ENCODE measurements at regions of chr20 and their contacts with region 1.

Region 1: GRCh38 chr20:53939572-53940359 is 130.6 kb downstream of the BCAS1 start:
- DNase-seq: peak; percentile 92
- H3K4me3 Mint-ChIP-seq: no peak overlapping the region
- H3K27ac Mint-ChIP-seq: no peak overlapping the region
- H3K4me1 Mint-ChIP-seq: peaks cover 38% of the 10 kb centered on the region
- H3K27me3 Mint-ChIP-seq: no peaks in the 10 kb centered on the region

Region 2: DNA sequence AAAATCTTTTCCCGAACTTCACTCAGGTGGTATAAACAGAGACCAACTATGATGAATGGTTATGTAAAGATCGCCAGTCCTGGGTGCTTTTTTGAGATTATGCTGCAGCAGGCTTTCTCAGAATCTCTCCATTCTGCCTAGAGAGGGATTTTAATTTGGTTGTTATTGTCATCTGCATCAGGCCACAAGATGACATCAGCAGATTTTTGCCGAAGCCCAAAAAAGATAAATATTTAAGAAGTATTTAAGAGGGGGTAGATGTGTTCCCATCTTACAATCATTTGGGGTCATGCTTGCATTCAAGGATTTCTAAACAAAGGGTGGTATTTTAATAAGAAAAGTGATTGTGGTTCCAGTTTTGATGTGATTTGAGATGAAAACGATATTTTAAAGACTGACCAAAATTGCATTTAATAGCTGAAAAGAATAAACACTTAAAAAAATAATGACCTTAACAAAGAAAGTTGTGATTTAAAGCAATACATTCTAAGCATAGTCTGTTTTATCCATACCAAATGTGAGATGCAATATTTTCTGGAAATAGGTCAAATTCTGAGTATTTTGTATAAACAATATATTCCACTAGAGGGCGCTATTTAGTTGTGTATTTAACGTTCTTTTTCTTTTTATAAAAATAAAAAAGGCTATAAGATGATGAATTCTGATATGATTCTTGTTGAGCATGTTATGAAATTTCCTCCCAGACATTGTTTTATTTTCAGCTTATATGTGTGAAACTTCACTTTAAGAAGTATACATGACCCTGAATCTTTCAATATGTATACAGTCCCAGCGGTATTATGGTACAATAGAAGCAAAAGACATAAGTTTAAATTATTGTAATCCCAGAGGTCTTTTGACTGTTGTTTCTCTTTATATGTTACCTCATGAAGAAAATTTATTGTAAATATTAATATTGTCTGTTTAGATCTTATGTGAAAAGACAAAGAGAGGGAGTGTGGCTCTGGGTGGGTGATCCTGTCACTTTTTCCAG is 1697.2 kb before region 1 on chr20:
- CTCF ChIA-PET with region 1: no interaction called
- intact Hi-C with region 1: loop called (anchors 10 kb)
- DNase-seq: no peak
- H3K4me3 Mint-ChIP-seq: no peak overlapping the region
- H3K27ac Mint-ChIP-seq: no peak overlapping the region
- H3K4me1 Mint-ChIP-seq: no peaks in the 10 kb centered on the region
- H3K27me3 Mint-ChIP-seq: no peaks in the 10 kb centered on the region

Region 3: DNA sequence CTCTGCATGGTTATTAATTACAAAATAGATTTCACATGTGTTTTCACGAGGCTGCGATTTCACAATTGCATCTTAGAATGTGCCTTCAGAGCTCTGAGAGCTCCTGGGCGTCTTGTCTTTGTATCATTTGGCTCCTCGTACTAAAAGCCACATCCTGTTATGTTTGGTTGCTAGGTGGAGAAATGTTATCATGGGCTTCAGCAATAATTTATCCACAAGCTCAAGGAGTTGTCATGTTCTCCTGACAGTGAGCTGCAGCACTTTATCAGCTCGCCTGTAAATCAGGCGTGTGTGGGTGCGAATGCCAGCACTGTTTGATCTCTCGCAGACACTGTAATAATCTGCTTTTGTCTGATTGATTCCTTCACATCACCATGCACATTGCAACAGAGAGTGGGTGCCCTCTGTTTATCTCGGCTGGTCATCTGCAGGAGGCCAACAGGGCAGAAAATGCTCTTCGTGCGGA is 1529.6 kb before region 1 on chr20:
- CTCF ChIA-PET with region 1: no interaction called
- intact Hi-C with region 1: loop called (anchors 10 kb)
- DNase-seq: peak; percentile 54
- H3K4me3 Mint-ChIP-seq: peak overlapping the region; percentile 20
- H3K27ac Mint-ChIP-seq: peak overlapping the region; percentile 17
- H3K4me1 Mint-ChIP-seq: peaks cover 66% of the 10 kb centered on the region
- H3K27me3 Mint-ChIP-seq: no peaks in the 10 kb centered on the region

Region 4: GRCh38 chr20:53149148-53149889 is 790.4 kb before region 1 on chr20:
- CTCF ChIA-PET with region 1: no interaction called
- intact Hi-C with region 1: loop called (anchors 10 kb)
- DNase-seq: no peak
- H3K4me3 Mint-ChIP-seq: peak overlapping the region; percentile 37
- H3K27ac Mint-ChIP-seq: peak overlapping the region; percentile 73
- H3K4me1 Mint-ChIP-seq: peaks cover 77% of the 10 kb centered on the region
- H3K27me3 Mint-ChIP-seq: no peaks in the 10 kb centered on the region

Region 5: GRCh38 chr20:53413186-53413631 is 526.6 kb before region 1 on chr20:
- CTCF ChIA-PET with region 1: no interaction called
- intact Hi-C with region 1: loop called (anchors 5 kb)
- DNase-seq: peak; percentile 73
- H3K4me3 Mint-ChIP-seq: peak overlapping the region; percentile 8
- H3K27ac Mint-ChIP-seq: no peak overlapping the region
- H3K4me1 Mint-ChIP-seq: peaks cover 12% of the 10 kb centered on the region
- H3K27me3 Mint-ChIP-seq: no peaks in the 10 kb centered on the region

Measured in activated naive CD4-positive, alpha-beta T cell treated with anti-CD3 and anti-CD28 coated beads for 36 hours (primary cell).